ENCODE measurements at regions of chr9 and their contacts with region 1.

Region 1: GRCh38 chr9:99563364-99563763 is 258.3 kb upstream of the NR4A3 start:
- DNase-seq: no peak
- ATAC-seq: no peak
- H3K4me3 ChIP-seq: no peak overlapping the region
- H3K27ac ChIP-seq: no peak overlapping the region
- H3K4me1 ChIP-seq: no peaks in the 10 kb centered on the region
- H3K27me3 ChIP-seq: no peaks in the 10 kb centered on the region
- CTCF ChIP-seq: no peak

Region 2: GRCh38 chr9:99523838-99524237 is 39.5 kb before region 1 on chr9:
- intact Hi-C with region 1: loop called in 1 of 2 experiments (anchors 5 kb)
- DNase-seq: no peak
- ATAC-seq: no peak
- H3K4me3 ChIP-seq: no peak overlapping the region
- H3K27ac ChIP-seq: no peak overlapping the region
- H3K4me1 ChIP-seq: no peaks in the 10 kb centered on the region
- H3K27me3 ChIP-seq: no peaks in the 10 kb centered on the region
- CTCF ChIP-seq: no peak

Measured in psoas muscle (tissue), 8 donors.